PC-9 (cell line): ENCODE measurements at regions of chr9 and their contacts with region 1.

Region 1: GRCh38 chr9:124392871-124393460 is 22.3 kb downstream of the PSMB7 start:
- DNase-seq: peak; percentile 87 to 99
- H3K4me3 ChIP-seq: peak overlapping the region; percentile 51; the same call in 1 of the 2 replicates
- H3K27ac ChIP-seq: peak overlapping the region; percentile 97
- H3K4me1 ChIP-seq: peaks cover 82% of the 10 kb centered on the region
- H3K27me3 ChIP-seq: no peaks in the 10 kb centered on the region
- CTCF ChIP-seq: peak; percentile 60; the same call in 1 of the 2 replicates

Region 2: GRCh38 chr9:123349691-123350480 is 1043.1 kb before region 1 on chr9:
- CTCF ChIA-PET with region 1: no interaction called
- POLR2A ChIA-PET with region 1: no interaction called
- intact Hi-C with region 1: loop called (anchors 2 kb)
- DNase-seq: peak in 1 of 2 experiments; percentile 62
- H3K4me3 ChIP-seq: no peak overlapping the region
- H3K27ac ChIP-seq: no peak overlapping the region
- H3K4me1 ChIP-seq: no peaks in the 10 kb centered on the region
- H3K27me3 ChIP-seq: peaks cover 25% of the 10 kb centered on the region; the same call in 1 of the 2 replicates
- CTCF ChIP-seq: peak; percentile 96

Region 3: GRCh38 chr9:123544007-123544827 is 848.7 kb before region 1 on chr9:
- CTCF ChIA-PET with region 1: no interaction called
- POLR2A ChIA-PET with region 1: no interaction called
- intact Hi-C with region 1: loop called (anchors 1 kb)
- DNase-seq: peak in 1 of 2 experiments; percentile 15
- H3K4me3 ChIP-seq: no peak overlapping the region
- H3K27ac ChIP-seq: no peak overlapping the region
- H3K4me1 ChIP-seq: no peaks in the 10 kb centered on the region
- H3K27me3 ChIP-seq: no peaks in the 10 kb centered on the region
- CTCF ChIP-seq: peak; percentile 89

Region 4: GRCh38 chr9:124040935-124041816 is 351.8 kb before region 1 on chr9:
- CTCF ChIA-PET with region 1: interaction called, 10 read pairs
- POLR2A ChIA-PET with region 1: interaction called, 3 read pairs
- intact Hi-C with region 1: loop called (anchors 10 kb)
- DNase-seq: peak in 1 of 2 experiments; percentile 46
- H3K4me3 ChIP-seq: no peak overlapping the region
- H3K27ac ChIP-seq: no peak overlapping the region
- H3K4me1 ChIP-seq: no peaks in the 10 kb centered on the region
- H3K27me3 ChIP-seq: peaks cover 63% of the 10 kb centered on the region
- CTCF ChIP-seq: peak; percentile 76

Region 5: DNA sequence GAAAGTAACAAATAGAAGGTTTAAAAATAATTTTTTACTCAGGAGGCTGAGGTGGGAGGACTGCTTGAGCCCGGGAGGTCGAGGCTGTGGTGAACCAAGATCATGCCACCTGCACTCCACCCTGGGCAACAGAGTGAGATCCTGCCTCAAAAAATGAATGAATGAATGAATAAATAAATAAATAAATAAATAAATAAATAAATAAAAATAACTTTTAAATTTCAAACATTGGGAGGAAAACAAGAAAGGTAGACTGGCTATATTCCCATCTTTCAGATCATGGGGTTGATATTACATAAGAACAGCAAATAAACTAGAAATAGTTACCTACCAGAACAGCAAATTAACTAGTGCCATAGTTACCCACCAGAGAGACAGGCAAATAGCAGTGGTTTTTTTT is 305.7 kb before region 1 on chr9:
- CTCF ChIA-PET with region 1: no interaction called
- POLR2A ChIA-PET with region 1: no interaction called
- intact Hi-C with region 1: no loop called
- DNase-seq: no peak
- H3K4me3 ChIP-seq: no peak overlapping the region
- H3K27ac ChIP-seq: no peak overlapping the region
- H3K4me1 ChIP-seq: no peaks in the 10 kb centered on the region
- H3K27me3 ChIP-seq: peaks cover 28% of the 10 kb centered on the region
- CTCF ChIP-seq: no peak

Region 6: DNA sequence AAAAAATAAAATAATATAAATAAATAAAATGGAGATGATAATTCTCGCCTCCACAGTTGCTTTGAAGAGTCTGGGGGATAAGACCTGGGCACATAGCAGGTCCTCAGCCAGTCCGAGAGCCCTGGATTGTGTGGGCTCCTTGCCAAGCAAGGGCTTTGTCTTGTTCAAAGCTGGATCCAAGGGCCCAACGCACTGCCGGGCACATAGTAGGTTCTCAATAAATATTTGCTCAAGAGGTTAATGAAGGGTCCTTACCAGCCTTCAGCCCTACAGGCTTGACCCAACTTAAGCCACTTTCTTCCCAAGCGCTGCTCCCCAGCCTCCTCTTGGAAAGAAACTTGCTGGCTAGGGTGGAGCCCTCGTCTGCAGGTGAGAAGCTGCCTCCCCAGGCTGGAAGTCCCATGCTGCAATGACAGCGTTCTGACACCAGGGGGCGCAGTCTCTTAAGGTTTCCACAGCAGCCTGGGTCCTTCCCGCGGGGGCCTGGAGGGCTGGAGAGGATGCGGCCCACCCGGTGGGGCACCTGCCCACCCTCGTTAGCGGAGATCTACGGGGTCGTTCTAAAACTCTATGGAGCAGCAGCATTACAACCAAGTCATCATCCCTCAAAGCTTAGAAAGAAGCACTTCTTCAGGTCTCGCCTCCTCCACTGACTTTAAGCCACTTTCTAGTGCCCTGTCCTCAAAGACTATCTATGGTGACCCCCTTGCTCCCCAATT is 266.2 kb before region 1 on chr9:
- CTCF ChIA-PET with region 1: interaction called, 6 read pairs
- POLR2A ChIA-PET with region 1: no interaction called
- intact Hi-C with region 1: loop called (anchors 2 kb)
- DNase-seq: peak; percentile 67 to 81
- H3K4me3 ChIP-seq: no peak overlapping the region
- H3K27ac ChIP-seq: no peak overlapping the region
- H3K4me1 ChIP-seq: no peaks in the 10 kb centered on the region
- H3K27me3 ChIP-seq: no peaks in the 10 kb centered on the region
- CTCF ChIP-seq: peak; percentile 99

Region 7: DNA sequence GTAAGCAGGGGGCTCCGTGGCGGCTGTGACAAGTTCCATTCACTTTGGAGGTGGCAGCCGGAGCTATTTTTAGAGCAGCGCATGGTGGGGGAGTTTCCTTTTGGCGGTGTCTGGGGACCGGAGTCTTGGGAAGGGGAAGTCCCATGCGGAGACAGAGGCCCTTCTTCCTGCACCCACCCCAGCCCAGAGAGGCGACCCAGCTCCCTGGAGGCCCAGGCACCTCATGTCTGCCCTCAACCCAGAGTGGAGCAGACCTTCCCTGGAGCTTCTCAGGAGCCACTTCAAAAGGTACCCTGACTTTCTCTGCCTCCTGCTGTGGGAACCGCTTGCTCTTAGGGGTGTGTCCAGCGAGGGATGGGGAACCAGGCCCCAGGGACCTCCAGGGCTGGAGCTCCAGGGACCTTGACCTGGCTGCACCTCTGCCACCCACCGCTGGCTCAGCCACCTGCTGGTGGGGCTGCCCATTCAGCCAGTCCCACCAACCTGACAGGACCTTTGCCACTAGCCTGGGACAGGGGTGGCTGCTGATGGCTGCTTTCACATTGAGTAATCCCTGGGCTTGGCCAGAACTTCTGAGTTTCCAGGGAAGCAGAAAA is 101.1 kb before region 1 on chr9:
- CTCF ChIA-PET with region 1: no interaction called
- POLR2A ChIA-PET with region 1: no interaction called
- intact Hi-C with region 1: loop called (anchors 10 kb)
- DNase-seq: peak in 1 of 2 experiments; percentile 27
- H3K4me3 ChIP-seq: no peak overlapping the region
- H3K27ac ChIP-seq: no peak overlapping the region
- H3K4me1 ChIP-seq: peaks cover 31% of the 10 kb centered on the region
- H3K27me3 ChIP-seq: no peaks in the 10 kb centered on the region
- CTCF ChIP-seq: no peak

Region 8: GRCh38 chr9:125343518-125344275 is 950.7 kb after region 1 on chr9:
- CTCF ChIA-PET with region 1: no interaction called
- POLR2A ChIA-PET with region 1: interaction called, 10 read pairs
- intact Hi-C with region 1: no loop called
- DNase-seq: peak in 1 of 2 experiments; percentile 64
- H3K4me3 ChIP-seq: no peak overlapping the region
- H3K27ac ChIP-seq: no peak overlapping the region
- H3K4me1 ChIP-seq: peaks cover 16% of the 10 kb centered on the region
- H3K27me3 ChIP-seq: no peaks in the 10 kb centered on the region
- CTCF ChIP-seq: no peak